ENCODE measurements at regions of chr16 and their contacts with region 1.

Region 1: GRCh38 chr16:84062734-84063640 is 20.4 kb upstream of the SLC38A8 start:
- DNase-seq: peak; percentile 73 to 79 (median 78)
- ATAC-seq: peak; percentile 97
- H3K4me3 ChIP-seq: no peak overlapping the region
- H3K4me1 ChIP-seq: no peaks in the 10 kb centered on the region
- CTCF ChIP-seq: peak; percentile 51

Region 2: DNA sequence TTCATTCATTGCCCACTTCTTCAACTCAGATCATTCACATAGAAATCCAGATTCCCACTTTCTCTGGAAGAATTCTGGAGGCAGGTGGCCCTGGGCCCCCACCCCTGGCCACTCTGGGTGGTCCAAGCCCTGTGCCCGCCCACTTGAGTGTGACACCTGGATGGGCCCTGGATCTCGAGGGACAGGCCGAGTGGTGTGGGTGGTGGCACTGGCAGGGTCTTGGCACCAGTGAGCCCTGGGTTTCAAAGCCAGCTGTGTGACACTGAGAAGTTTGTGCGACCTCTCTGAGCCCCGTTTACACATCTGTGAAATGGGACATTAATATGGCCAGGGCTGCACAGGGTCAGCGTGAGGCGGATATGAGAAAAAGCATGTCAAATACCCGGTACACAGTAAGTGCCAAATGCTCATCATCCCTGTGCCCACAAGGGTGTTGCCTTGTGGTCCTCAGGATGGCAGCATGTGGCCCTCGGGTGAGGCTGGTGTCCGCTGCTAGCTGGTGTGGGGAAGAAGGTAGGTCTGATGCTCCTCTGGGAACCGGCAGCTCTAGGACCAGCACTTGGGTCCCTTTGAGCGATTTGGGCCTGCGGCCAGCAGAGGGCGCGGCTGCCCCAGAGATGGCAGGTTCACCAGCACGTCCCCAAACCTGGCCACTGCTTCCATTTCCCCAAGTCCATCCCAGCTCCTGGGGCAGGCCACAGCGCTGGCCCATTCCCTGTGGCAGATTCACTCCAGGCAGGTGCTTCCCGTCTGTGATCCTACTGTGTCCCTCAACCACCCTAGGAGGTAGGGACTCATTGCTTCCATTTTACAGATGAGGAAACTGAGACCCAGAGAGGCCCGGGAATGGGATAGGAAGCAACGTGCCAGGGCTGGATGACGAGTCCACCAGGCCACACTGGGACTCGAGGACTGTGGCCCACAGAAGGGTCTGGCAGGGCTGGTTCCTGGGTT is 106.4 kb before region 1 on chr16:
- intact Hi-C with region 1: loop called (anchors 5 to 10 kb)
- DNase-seq: peak; percentile 81 to 90 (median 88)
- ATAC-seq: peak; percentile 31
- H3K4me3 ChIP-seq: no peak overlapping the region
- H3K4me1 ChIP-seq: peaks cover 17% of the 10 kb centered on the region
- CTCF ChIP-seq: peak; percentile 57

Region 3: GRCh38 chr16:83967806-83968305 is 95.1 kb before region 1 on chr16 and contains the start of gene NECAB2:
- intact Hi-C with region 1: loop called (anchors 5 to 10 kb)
- DNase-seq: peak in 2 of 3 donors; percentile 43 to 53
- ATAC-seq: peak; percentile 54
- H3K4me3 ChIP-seq: no peak within 1 kb of the TSS
- H3K4me1 ChIP-seq: no peaks in the 10 kb centered on the region
- CTCF ChIP-seq: peak; percentile 32
- total RNA-seq, gene NECAB2: 0.55 to 2.0 (median 0.96) TPM

Region 4: DNA sequence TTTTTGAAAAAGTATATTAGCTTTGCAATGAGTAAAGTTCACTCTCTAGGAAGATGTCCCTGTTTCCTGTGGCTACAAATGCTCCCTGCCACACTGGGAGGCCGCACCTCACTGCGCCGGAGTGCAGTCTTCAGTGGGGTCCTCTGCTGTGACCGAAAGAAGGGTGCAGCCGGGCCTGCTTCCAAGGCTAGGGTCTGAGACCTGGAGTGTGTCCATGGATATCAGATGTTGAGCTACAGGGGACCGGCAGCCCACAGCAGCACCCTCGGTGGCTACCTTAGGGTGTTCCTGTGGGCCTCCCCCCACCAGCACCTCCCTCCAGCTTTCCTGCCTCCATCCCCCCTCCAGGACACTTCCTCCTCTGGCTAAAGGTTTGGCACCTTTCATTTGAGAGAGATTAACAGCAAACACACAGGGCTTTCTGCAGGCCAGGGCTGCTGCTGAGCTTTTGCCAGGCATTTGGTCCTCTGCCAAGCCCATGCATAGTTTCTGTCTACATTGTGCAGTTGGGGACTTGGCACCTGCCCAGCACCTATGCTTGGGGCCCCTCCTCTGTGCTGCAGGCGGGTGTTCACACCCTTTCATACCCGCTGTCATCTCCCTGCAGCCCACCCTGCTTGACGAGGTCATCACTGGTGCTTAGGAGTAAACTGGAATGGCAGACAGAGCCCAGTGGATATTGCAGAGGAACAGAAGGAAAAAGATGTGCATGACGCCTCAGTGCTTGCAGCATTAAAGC is 723.0 kb after region 1 on chr16:
- intact Hi-C with region 1: no loop called
- DNase-seq: peak; percentile 56 to 68 (median 66)
- ATAC-seq: peak; percentile 70
- H3K4me3 ChIP-seq: no peak overlapping the region
- H3K4me1 ChIP-seq: peaks cover 14% of the 10 kb centered on the region
- CTCF ChIP-seq: no peak